Mammary epithelial cell (primary cell): ENCODE measurements at regions of chr1 and their contacts with region 1.

Region 1: DNA sequence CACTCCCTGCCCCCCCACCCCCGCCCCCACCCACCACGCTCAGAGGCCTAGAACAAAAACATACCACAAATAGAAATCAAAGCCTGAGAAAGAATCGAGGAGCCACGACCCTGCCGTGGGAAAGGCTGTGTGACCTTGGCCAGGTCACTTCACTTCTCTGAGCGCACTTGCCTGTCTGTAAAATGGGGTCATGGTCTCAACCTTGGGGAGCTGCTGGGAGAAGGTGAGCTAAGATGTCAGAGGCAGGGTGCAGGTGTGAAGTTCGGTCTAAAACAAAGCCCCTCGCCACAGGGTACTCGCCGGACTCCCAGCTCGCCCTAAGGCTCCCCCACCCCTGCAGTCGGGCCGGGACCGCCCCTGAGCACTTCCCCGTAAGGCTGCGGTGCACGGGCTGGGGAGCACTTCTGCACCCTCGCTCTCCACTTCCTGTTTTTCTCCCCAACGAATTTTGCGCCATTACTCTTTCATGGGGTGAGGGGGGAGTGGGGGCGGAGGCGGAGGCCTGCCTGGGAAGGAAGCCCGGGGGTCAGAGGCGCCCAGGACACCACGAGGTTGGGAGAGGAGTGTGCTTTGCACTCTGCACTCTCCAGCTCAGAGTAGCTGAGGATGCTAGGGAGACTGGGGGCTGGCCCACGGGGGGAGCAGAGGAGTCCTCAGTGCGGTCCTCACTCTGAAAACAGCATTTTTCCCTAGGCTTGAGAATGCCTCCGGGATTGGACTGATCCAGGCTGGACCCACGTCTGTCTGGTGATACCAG is 21.9 kb upstream of the PIK3CD start:
- DNase-seq: no peak
- H3K4me3 ChIP-seq: no peak overlapping the region
- H3K27ac ChIP-seq: no peak overlapping the region
- H3K4me1 ChIP-seq: peaks cover 10% of the 10 kb centered on the region
- H3K27me3 ChIP-seq: no peaks in the 10 kb centered on the region
- CTCF ChIP-seq: no peak

Region 2: GRCh38 chr1:9486466-9487140 is 143.0 kb before region 1 on chr1:
- CTCF ChIA-PET with region 1: no interaction called
- dilution Hi-C with region 1: no loop called
- in situ Hi-C with region 1: no loop called
- intact Hi-C with region 1: no loop called
- DNase-seq: no peak
- H3K4me3 ChIP-seq: no peak overlapping the region
- H3K27ac ChIP-seq: no peak overlapping the region
- H3K4me1 ChIP-seq: no peaks in the 10 kb centered on the region
- H3K27me3 ChIP-seq: no peaks in the 10 kb centered on the region
- CTCF ChIP-seq: no peak

Region 3: GRCh38 chr1:9643351-9644256 is 14.0 kb after region 1 on chr1:
- CTCF ChIA-PET with region 1: interaction called, 34 read pairs
- dilution Hi-C with region 1: no loop called
- in situ Hi-C with region 1: no loop called
- intact Hi-C with region 1: no loop called
- DNase-seq: no peak
- H3K4me3 ChIP-seq: no peak overlapping the region
- H3K27ac ChIP-seq: no peak overlapping the region
- H3K4me1 ChIP-seq: peaks cover 12% of the 10 kb centered on the region
- H3K27me3 ChIP-seq: no peaks in the 10 kb centered on the region
- CTCF ChIP-seq: no peak

Region 4: GRCh38 chr1:9659328-9659998 is 29.8 kb after region 1 on chr1:
- CTCF ChIA-PET with region 1: no interaction called
- dilution Hi-C with region 1: no loop called
- in situ Hi-C with region 1: no loop called
- intact Hi-C with region 1: no loop called
- DNase-seq: peak; percentile 61
- H3K4me3 ChIP-seq: no peak overlapping the region
- H3K27ac ChIP-seq: no peak overlapping the region
- H3K4me1 ChIP-seq: peaks cover 6% of the 10 kb centered on the region
- H3K27me3 ChIP-seq: no peaks in the 10 kb centered on the region
- CTCF ChIP-seq: no peak

Region 5: DNA sequence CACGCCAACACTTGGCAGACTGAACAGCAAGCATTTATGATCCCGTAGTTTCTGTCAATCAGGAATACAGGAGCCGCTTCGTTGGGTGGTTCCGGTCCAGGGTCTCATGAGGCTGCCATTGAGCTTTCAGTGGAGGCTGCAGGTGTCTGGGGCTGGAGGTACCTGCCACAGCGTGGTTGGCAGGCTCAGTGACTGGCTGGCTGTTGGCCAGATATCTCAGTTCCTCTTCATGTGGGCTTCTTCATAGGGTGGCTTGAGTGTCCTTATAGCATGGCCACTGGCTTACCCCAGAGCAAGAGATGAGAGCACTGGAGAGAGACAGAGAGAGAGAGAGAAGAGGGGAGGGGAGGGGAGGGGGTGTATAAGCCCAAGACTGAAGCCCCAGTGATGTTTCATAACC is 51.2 kb after region 1 on chr1:
- CTCF ChIA-PET with region 1: no interaction called
- dilution Hi-C with region 1: no loop called
- in situ Hi-C with region 1: no loop called
- intact Hi-C with region 1: no loop called
- DNase-seq: no peak
- H3K4me3 ChIP-seq: no peak overlapping the region
- H3K27ac ChIP-seq: no peak overlapping the region
- H3K4me1 ChIP-seq: no peaks in the 10 kb centered on the region
- H3K27me3 ChIP-seq: no peaks in the 10 kb centered on the region
- CTCF ChIP-seq: no peak

Region 6: DNA sequence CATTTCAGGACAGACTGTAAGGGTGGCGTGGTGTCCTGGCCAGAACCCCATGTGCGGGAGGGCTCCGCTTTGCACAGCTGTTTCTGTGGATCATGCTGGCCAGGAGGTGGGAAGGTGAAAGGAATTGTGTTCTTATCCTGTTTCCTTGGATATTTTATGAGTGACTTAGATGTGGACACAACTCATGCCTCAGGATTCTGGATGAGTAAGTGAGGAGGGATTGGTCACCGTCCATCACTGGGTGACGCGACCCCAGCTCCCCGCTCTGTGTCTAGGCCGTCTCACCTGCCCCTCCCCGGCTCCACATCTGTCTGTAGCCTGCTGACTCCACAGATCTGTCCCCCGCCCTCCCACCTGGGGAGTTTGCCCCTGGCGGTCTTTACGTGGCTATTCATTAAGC is 70.7 kb after region 1 on chr1:
- CTCF ChIA-PET with region 1: no interaction called
- dilution Hi-C with region 1: no loop called
- in situ Hi-C with region 1: loop called in 1 of 2 experiments (anchors 5 kb)
- intact Hi-C with region 1: no loop called
- DNase-seq: peak; percentile 91
- H3K4me3 ChIP-seq: no peak overlapping the region
- H3K27ac ChIP-seq: peak overlapping the region; percentile 82
- H3K4me1 ChIP-seq: peaks cover 32% of the 10 kb centered on the region
- H3K27me3 ChIP-seq: no peaks in the 10 kb centered on the region
- CTCF ChIP-seq: no peak

Region 7: DNA sequence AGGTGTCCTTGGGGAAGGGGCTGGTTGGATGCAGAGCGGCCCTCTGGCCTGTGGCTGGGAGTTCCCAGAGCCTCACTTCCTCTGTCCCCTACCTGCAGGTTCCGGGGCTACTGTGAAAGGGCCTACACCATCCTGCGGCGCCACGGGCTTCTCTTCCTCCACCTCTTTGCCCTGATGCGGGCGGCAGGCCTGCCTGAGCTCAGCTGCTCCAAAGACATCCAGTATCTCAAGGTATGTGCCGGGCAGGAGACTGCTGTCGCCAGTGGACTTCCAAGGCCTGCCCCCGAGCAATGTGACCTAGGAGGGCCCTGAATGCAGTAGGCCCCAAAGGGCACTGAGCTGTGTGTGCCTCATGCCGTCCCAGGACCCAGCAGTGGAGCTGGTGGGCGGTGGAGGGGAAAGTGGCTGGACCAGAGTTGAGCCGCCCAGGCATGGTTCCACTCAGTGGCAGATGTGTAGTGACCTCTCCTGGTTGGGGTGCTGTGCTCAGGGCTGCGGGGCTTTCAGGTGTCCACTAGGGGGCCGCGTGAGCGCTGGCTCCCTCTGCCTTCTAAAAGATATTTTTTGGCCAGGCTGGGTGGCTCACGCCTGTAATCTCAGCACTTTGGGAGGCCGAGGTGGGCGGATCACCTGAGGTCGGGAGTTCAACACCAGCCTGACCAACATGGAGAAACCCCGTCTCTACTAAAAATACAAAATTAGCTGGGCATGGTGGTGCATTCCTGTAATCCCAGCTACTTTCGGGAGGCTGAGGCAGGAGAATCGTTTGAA is 95.3 kb after region 1 on chr1:
- CTCF ChIA-PET with region 1: no interaction called
- dilution Hi-C with region 1: no loop called
- in situ Hi-C with region 1: no loop called
- intact Hi-C with region 1: loop called (anchors 1 kb)
- DNase-seq: peak; percentile 45
- H3K4me3 ChIP-seq: no peak overlapping the region
- H3K27ac ChIP-seq: no peak overlapping the region
- H3K4me1 ChIP-seq: peaks cover 27% of the 10 kb centered on the region
- H3K27me3 ChIP-seq: no peaks in the 10 kb centered on the region
- CTCF ChIP-seq: peak; percentile 87 to 91

Region 8: GRCh38 chr1:9867408-9868243 is 238.0 kb after region 1 on chr1:
- CTCF ChIA-PET with region 1: no interaction called
- dilution Hi-C with region 1: no loop called
- in situ Hi-C with region 1: loop called in 1 of 2 experiments (anchors 25 kb)
- intact Hi-C with region 1: loop called (anchors 1 kb)
- DNase-seq: peak; percentile 61
- H3K4me3 ChIP-seq: no peak overlapping the region
- H3K27ac ChIP-seq: no peak overlapping the region
- H3K4me1 ChIP-seq: peaks cover 14% of the 10 kb centered on the region
- H3K27me3 ChIP-seq: no peaks in the 10 kb centered on the region
- CTCF ChIP-seq: peak; percentile 95 to 98